GM13976 (cell line): ENCODE measurements at regions of chr6 and their contacts with region 1.

Region 1: DNA sequence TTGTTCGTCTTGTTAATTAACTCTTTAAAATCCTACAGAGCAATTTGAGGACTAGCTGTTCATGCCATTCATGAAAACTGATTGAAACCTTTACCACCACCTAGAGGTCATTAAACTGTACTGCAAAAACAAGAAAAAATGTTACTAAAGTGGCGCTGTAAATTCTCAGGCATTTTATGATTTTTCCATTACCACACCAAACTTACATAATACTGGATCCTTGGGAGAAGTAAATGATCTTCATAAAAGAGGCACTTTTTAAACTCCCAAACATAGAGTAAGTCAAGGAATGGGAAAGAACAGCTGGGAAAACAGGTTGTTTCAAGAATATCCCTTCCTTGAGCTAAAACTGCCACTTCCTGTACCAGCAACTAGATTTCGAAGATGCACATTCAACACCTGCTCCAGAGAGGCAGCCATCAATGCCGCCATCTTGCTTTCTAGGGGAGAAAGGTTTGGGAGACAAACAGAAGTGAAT is 54.3 kb downstream of the MYLIP start:
- DNase-seq: peak; percentile 54
- CTCF ChIP-seq: peak; percentile 41

Region 2: DNA sequence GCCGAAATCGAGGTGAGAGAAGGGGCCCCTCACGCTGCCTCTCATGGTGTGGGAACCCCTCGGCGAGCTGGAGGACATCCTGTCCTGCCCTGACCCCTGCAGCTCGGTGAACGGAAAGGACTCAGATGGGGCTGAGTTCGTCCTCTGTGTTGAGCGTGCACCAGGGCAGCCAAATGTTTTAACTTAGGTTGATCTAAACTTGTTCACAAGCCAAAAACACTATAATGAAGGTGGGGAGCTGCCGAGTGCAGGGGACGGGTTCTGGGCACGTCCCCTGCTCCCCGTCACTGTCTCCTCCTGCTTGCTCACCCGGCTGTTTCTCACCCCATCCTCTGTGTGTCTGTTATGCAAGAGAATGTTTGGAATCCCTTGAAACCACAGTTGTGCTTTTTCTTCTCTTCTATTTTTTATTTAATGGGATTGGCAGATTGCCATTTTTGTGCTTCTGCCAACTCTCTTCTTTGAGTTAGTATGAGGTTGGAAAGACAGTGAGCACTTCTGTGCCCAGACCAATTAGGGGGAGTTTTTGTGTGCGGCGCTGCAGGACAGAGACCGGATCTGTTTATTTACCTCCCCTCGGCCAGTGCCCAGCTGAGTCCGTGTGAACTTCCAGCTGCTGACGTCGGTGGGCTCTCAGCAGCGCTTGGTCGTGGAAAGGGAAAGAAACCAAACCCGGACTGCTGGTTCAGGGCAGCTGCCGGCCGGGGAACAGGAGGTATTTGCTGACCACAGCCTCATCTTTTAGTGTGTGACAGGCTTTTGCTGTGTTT is 678.5 kb before region 1 on chr6:
- in situ Hi-C with region 1: loop called (anchors 25 kb)
- DNase-seq: no peak
- CTCF ChIP-seq: no peak